IMR-90 (cell line): ENCODE measurements at regions of chr3 and their contacts with region 1.

Region 1: GRCh38 chr3:196341137-196341536 is 2.9 kb upstream of the TM4SF19 start:
- DNase-seq: peak; percentile 72
- ATAC-seq: peak; percentile 84
- H3K4me3 ChIP-seq: no peak overlapping the region
- H3K27ac ChIP-seq: no peak overlapping the region
- H3K4me1 ChIP-seq: no peaks in the 10 kb centered on the region
- H3K27me3 ChIP-seq: no peaks in the 10 kb centered on the region
- CTCF ChIP-seq: no peak
- POLR2A ChIP-seq: no peak
- RAD21 ChIP-seq: no peak

Region 2: GRCh38 chr3:196093317-196094111 is 247.6 kb before region 1 on chr3:
- CTCF ChIA-PET with region 1: no interaction called
- POLR2A ChIA-PET with region 1: no interaction called
- dilution Hi-C with region 1: no loop called
- in situ Hi-C with region 1: no loop called
- intact Hi-C with region 1: no loop called
- DNase-seq: peak; percentile 28
- ATAC-seq: peak; percentile 44; the same call in 1 of the 2 replicates
- H3K4me3 ChIP-seq: no peak overlapping the region
- H3K27ac ChIP-seq: no peak overlapping the region
- H3K4me1 ChIP-seq: no peaks in the 10 kb centered on the region; the same call in 1 of the 2 replicates
- H3K27me3 ChIP-seq: peaks cover 16% of the 10 kb centered on the region
- CTCF ChIP-seq: no peak
- POLR2A ChIP-seq: no peak
- RAD21 ChIP-seq: no peak

Region 3: DNA sequence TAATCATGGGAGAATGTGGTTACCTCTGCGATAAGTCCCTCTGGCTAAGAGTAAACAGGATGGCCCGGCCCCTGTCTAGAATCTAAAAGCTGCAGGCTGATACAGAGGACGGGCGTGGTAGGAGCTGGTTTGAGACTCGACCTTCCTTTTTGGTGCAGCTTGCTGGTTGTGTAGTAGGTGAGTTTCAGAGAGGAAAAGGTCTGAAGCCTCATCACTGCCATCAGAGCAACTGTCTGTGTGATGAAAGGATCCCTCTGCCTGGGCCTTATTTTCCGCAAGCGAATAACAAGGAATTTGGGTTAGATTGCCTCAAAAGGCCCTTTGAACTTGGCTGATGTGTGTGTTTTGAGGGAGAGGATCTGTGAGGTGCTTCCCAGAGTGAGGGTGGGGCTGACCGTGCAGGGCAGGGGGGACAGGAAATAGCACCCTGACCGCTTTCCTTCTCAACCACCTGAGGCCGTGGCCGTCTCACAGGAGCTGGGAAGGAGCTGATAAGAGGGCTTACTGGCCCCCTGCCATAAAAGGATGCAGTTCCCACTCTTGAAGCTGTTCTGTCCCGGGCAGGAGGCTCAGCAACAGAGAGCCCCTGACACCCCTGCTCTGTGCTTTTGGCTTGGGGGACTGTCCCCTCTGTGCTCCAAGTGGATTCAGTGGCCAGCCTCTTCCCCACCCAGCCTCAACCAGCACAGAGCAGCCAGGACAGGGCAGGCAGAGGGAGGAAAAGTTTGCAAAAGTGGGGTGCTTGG is 213.7 kb before region 1 on chr3:
- CTCF ChIA-PET with region 1: no interaction called
- POLR2A ChIA-PET with region 1: interaction called, 13 read pairs
- dilution Hi-C with region 1: no loop called
- in situ Hi-C with region 1: no loop called
- intact Hi-C with region 1: no loop called
- DNase-seq: no peak
- ATAC-seq: no peak
- H3K4me3 ChIP-seq: no peak overlapping the region
- H3K27ac ChIP-seq: no peak overlapping the region
- H3K4me1 ChIP-seq: no peaks in the 10 kb centered on the region; the same call in 1 of the 2 replicates
- H3K27me3 ChIP-seq: peaks cover 9% of the 10 kb centered on the region
- CTCF ChIP-seq: no peak
- POLR2A ChIP-seq: no peak
- RAD21 ChIP-seq: no peak

Region 4: DNA sequence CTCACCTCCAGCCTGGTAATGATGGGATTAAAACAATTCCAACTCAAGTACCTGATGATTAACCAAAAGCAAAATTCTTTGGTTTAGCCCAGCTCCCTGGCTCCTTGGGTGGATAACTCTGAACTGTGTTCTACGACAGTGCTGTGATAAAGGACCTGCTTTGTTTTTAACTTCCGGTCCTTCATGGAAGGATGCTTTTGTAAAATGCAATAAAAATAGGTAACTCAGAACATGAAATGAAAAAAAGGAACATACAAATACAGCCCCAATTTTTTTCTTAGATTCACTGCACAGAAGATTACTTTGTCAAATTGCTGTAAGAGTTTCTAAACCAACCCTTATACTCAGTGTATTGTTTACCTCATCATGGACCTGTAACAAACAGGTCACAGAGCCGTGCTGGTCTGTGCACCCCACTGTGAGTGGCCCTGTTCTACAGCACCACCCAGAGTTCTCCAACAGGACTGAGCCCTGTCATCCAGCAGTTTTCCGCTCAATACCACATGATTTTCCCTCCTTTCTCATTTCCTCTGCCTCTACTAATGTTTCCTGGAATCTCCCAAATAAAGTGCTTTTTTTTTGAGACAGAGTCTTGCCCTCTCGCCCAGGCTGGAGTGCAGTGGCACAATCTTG is 48.7 kb before region 1 on chr3:
- CTCF ChIA-PET with region 1: no interaction called
- POLR2A ChIA-PET with region 1: interaction called, 10 read pairs
- dilution Hi-C with region 1: no loop called
- in situ Hi-C with region 1: no loop called
- intact Hi-C with region 1: no loop called
- DNase-seq: no peak
- ATAC-seq: no peak
- H3K4me3 ChIP-seq: no peak overlapping the region
- H3K27ac ChIP-seq: no peak overlapping the region
- H3K4me1 ChIP-seq: no peaks in the 10 kb centered on the region
- H3K27me3 ChIP-seq: no peaks in the 10 kb centered on the region
- CTCF ChIP-seq: no peak
- POLR2A ChIP-seq: no peak
- RAD21 ChIP-seq: no peak

Region 5: GRCh38 chr3:196486263-196486662 is 145.1 kb after region 1 on chr3:
- CTCF ChIA-PET with region 1: no interaction called
- POLR2A ChIA-PET with region 1: no interaction called
- dilution Hi-C with region 1: no loop called
- in situ Hi-C with region 1: no loop called
- intact Hi-C with region 1: no loop called
- DNase-seq: no peak
- ATAC-seq: no peak
- H3K4me3 ChIP-seq: no peak overlapping the region
- H3K27ac ChIP-seq: no peak overlapping the region
- H3K4me1 ChIP-seq: no peaks in the 10 kb centered on the region
- H3K27me3 ChIP-seq: no peaks in the 10 kb centered on the region
- CTCF ChIP-seq: peak; percentile 19; the same call in 1 of the 2 replicates
- POLR2A ChIP-seq: no peak
- RAD21 ChIP-seq: no peak